ENCODE measurements at regions of chr20 and their contacts with region 1.

Region 1: DNA sequence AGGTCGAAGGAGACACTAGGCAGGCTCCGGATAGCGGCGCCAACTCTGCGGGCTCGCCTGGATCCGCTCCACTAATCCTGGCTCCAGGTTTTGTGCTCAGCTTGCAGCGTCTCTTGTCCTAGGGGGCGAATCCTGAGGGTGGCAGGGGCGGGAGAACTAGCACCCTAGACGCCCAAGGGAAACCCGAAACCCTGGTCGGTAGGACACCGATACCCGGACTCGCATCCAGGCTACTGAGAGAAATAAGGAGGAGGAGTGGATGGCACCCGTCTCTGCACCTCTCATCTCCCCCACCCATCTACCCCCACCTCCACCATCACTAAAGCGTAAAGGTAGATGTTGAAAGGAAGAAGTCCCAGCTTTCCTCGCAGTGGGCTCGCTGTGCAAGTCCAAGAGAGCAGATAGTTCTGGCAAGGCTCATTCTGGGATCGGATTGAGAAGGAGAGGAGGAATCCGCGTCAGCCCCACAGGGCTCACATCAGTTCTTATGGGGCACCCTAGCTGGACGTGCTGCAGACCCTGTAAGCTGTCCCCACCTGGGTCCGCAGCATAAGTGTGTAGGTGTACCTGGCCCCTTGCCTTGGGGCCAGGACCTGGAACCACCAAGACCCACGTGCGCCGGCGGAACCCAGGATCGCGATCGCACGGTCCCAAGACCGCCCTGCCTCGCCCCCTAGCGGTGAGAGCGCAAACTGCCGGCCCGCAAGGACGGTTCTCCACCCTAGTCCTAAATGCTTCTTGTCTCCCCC is 6.9 kb downstream of the SLC32A1 start:
- DNase-seq: peak; percentile 90
- H3K4me3 ChIP-seq: peak overlapping the region; percentile 41 to 53
- H3K27ac ChIP-seq: no peak overlapping the region
- H3K4me1 ChIP-seq: peaks cover 0 to 16% of the 10 kb centered on the region in 2 experiments; a peak in 2 of 4 replicates
- H3K27me3 ChIP-seq: peaks cover 93% of the 10 kb centered on the region
- CTCF ChIP-seq: peak; percentile 97
- EP300 ChIP-seq: no peak
- RAD21 ChIP-seq: peak; percentile 73

Region 2: GRCh38 chr20:38665094-38665865 is 65.9 kb before region 1 on chr20:
- CTCF ChIA-PET with region 1: interaction called, 25 read pairs
- POLR2A ChIA-PET with region 1: no interaction called
- DNase-seq: peak; percentile 52
- H3K4me3 ChIP-seq: no peak overlapping the region
- H3K27ac ChIP-seq: no peak overlapping the region
- H3K4me1 ChIP-seq: peaks cover 0 to 20% of the 10 kb centered on the region in 2 experiments; a peak in 1 of 4 replicates
- H3K27me3 ChIP-seq: peaks cover 6% of the 10 kb centered on the region
- CTCF ChIP-seq: no peak
- EP300 ChIP-seq: no peak
- RAD21 ChIP-seq: no peak

Region 3: DNA sequence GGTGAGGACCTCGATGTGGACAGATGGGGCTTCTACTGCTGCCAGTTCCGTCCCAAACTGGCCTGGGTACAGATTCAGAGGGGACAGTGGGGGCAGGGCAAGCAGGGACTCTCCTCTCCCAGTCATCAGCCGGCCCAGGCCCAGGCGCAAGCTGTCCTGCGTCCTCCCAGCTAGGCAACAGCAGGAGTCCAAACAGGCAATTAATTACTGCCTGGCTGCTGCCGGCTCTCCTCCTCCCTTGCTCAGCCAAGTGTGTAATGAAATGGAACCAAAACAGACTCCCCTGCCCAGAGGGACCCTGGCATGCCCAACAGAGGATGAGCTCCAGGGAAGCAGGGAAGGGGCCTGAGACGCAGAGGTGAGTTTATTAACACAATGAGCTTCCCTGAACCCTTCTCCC is 24.7 kb before region 1 on chr20:
- CTCF ChIA-PET with region 1: interaction called, 127 read pairs
- POLR2A ChIA-PET with region 1: no interaction called
- DNase-seq: peak; percentile 81
- H3K4me3 ChIP-seq: no peak overlapping the region
- H3K27ac ChIP-seq: no peak overlapping the region
- H3K4me1 ChIP-seq: peaks cover 0 to 8% of the 10 kb centered on the region in 2 experiments; a peak in 1 of 4 replicates
- H3K27me3 ChIP-seq: 0 out of 2 replicates have a peak, but pooled peaks cover 6% of the 10 kb centered on the region
- CTCF ChIP-seq: no peak
- EP300 ChIP-seq: peak in 1 of 2 experiments; percentile 76; a peak in 1 of 4 replicates
- RAD21 ChIP-seq: no peak; the same call in 1 of the 2 replicates

Region 4: DNA sequence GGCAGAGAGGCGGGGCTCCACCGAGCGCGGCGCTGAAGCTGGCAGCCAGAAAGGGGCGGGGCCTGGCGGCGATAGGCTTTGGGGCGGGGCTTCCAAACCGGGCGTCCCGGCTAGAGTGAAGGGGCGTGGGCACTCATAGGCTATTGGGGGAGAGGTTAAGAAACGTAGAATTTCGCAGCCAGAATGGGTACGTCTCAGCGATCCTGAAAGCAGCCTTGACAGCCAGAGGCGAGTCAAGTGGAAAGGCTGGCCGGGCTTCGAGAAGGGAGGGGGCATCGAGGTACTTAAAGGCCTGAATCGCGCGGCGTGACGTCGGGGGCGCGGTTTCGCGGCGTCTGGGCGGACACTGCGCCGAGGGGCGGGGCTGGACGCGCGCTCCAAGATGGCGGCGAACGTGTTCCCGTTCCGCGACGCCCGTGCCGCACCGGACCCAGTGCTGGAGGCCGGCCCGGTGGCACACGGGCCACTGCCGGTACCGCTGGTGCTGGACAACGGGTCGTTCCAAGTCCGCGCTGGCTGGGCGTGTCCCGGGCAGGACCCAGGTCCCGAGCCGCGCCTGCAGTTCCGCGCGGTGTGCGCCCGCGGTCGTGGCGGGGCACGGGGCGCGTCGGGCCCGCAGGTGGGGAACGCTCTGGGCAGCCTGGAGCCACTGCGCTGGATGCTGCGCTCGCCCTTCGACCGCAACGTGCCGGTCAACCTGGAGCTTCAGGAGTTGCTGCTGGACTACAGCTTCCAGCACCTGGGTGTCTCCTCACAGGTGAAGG is 17.1 kb after region 1 on chr20 and contains the start of gene ACTR5:
- CTCF ChIA-PET with region 1: interaction called, 88 read pairs
- POLR2A ChIA-PET with region 1: no interaction called
- DNase-seq: peak; percentile 98
- H3K4me3 ChIP-seq: peak within 1 kb of the TSS; percentile 89 to 90
- H3K27ac ChIP-seq: peak within 1 kb of the TSS; percentile 84 to 89
- H3K4me1 ChIP-seq: peaks cover 0 to 14% of the 10 kb centered on the region in 2 experiments; a peak in 2 of 4 replicates
- H3K27me3 ChIP-seq: no peaks in the 10 kb centered on the region
- CTCF ChIP-seq: no peak
- EP300 ChIP-seq: no peak
- RAD21 ChIP-seq: no peak
- polyA plus RNA-seq, gene ACTR5: 9.7 and 10.9 TPM in 2 replicates

Region 5: DNA sequence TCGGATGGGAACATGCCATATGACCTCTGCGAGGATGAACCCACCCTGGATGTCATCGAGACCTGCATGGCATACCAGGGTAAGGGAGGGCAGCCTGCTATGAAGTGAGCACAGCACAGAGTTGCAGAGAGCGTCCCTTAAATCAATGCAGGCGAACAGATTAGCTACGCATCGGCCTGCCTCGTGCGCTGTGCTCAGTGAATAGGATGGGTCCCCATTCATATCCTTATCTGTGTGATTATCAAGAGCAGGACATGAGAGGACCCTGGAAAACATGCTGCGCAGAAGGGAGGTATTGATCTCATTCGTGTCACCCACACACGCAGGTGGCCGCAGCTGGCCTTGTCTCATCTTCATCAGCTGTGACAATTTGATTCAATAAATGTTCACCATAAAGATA is 169.4 kb after region 1 on chr20:
- CTCF ChIA-PET with region 1: interaction called, 30 read pairs
- POLR2A ChIA-PET with region 1: no interaction called
- DNase-seq: no peak
- H3K4me3 ChIP-seq: no peak overlapping the region
- H3K27ac ChIP-seq: no peak overlapping the region
- H3K4me1 ChIP-seq: peaks cover 0 to 5% of the 10 kb centered on the region in 2 experiments; a peak in 1 of 4 replicates
- H3K27me3 ChIP-seq: peaks cover 17% of the 10 kb centered on the region; the same call in 1 of the 2 replicates
- CTCF ChIP-seq: no peak
- EP300 ChIP-seq: no peak
- RAD21 ChIP-seq: no peak

Region 6: DNA sequence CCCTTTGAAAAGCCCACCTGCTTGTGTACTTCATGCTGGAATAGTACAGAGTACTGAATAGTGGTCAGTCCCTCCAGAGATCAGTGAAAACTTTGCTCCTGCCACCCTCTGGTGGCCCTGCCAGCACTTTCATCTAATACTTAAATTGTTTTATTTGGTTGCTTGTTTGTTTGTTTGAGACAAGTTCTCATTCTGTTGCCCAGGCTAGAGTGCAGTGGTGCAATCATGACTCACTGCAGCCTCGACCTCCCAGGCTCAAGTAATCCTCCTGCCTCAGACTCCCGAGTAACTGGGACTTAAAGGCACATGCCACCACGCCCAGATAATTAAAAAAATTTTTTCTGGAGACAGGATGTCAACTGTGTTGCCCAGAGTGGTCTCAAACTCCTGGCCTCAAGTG is 204.1 kb after region 1 on chr20:
- CTCF ChIA-PET with region 1: no interaction called
- POLR2A ChIA-PET with region 1: no interaction called
- DNase-seq: no peak
- H3K4me3 ChIP-seq: no peak overlapping the region
- H3K27ac ChIP-seq: no peak overlapping the region
- H3K4me1 ChIP-seq: peaks cover 6 to 8% of the 10 kb centered on the region in 2 experiments; a peak in 2 of 4 replicates
- H3K27me3 ChIP-seq: no peaks in the 10 kb centered on the region
- CTCF ChIP-seq: peak; percentile 38; the same call in 1 of the 2 replicates
- EP300 ChIP-seq: no peak
- RAD21 ChIP-seq: peak; percentile 51

Region 7: DNA sequence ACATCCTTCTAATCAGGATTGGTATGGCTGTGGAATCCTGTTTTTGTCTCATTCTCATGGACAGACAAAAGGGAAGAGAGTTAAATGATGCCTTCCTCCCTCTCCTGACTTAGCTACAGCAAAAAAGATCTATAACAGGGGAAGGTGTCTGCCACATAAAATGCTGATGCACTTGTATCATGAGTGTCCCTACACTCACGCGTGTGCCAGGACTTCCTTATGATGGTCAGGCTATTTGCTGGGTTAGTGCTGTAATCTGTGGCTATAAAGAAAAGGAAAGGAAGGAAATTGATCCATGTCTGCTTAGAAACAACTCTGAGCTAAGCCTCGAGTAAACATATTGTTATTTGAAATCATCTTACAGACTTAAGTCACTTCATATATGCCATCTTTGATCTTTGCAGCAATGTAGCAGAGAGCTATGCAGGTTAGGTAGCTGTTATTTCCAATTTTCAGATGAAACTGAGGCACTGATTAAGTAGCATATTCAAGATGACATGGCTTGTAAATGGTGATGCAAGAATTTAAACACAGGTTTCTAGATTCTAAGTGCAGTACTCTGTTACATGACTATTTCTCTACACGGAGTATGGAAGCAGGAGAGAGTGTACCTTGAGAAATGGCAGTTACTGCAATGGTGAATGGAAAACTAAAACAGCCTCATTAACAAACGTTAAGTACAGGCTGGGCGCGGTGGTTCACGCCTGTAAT is 222.6 kb after region 1 on chr20:
- CTCF ChIA-PET with region 1: no interaction called
- POLR2A ChIA-PET with region 1: no interaction called
- DNase-seq: no peak
- H3K4me3 ChIP-seq: no peak overlapping the region
- H3K27ac ChIP-seq: no peak overlapping the region
- H3K4me1 ChIP-seq: no peaks in the 10 kb centered on the region
- H3K27me3 ChIP-seq: no peaks in the 10 kb centered on the region
- CTCF ChIP-seq: no peak
- EP300 ChIP-seq: no peak
- RAD21 ChIP-seq: no peak

Measured in SK-N-SH (cell line).